HEK293T (cell line): ENCODE measurements at regions of chr1 and their contacts with region 1.

Region 1: DNA sequence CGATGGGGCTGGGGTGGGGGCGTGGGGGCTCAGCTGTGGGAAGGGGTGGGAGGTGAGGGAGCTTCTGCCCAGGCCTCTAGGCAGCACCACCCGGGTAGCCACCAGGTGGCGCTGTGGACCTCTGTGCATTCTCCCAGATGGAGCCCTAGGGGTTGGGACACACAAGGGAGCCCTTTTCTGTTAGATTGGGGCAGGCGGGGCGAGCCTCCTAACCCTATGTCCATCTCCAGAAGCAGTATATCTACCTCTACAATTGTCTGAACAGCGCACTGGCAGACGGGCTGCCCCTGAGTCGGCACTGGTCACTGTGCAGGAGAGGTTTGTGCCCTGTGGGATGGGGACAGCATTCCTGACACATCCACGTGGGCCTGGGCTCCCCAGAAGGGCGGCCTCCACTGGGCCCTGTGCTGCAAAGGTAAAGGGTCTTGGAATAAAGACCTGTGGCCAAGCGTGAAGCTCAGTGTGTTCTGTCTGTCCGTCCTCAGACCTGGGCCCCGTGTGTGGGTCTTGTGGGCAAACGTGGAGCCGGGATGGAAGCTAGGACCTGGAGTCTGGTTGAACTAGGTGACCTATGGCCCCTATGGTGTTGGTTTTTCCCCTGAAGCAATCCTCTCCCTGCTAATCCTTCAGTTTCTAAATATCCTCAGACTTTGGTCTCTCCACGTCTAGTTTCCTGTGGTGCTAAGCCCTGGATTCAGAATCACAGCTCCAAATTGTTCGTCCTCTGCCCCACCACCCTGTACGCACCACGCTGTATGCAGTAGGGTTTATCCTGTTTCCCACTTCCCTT is 4.4 kb upstream of the LGR6 start:
- DNase-seq: peak; percentile 68

Region 2: DNA sequence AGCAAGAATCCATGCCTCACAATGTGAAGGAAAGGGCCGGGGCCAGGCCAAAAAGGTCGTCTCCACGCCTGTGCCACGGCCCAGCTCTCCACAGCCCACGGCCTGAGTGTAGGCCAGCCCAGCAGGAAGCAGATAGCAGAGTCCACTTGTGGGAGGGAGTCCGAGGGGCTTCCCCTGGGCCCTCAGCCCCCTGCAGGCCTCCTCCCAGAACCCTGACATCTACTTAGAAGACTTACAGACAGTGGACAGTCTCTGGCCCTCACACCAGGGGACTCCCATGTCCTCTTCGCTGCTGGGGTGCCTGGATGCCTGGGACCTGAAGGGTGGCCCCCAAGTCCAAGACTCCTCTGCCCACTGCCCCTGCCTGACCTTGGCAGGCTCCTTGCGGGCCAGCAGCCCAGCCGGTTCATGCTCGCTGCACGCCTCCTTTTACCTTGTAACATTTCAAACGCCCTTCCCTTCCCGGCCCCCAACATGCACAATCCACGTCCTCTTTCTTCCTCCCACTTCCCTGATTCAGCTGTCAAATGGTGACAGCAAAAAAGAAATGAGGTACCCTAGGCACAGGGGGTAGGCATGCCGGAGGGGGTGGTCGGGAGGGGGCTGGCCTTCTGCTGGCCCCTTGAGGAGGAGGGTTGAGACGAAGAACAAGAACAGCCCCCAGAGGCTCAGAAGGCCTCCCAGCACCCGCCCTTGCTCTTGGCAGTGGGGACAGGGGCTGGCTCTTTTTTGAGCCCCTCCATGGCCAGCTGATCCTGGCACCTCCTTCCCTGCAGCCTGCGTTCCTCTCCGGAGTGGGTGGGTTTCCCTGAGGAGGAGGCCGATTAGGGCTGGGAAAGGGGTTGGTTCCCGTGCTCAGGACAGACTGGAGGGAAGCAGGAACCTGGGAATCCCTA is 27.8 kb before region 1 on chr1:
- CTCF ChIA-PET with region 1: no interaction called
- POLR2A ChIA-PET with region 1: no interaction called
- DNase-seq: no peak

Region 3: GRCh38 chr1:202315576-202316168 is 126.5 kb after region 1 on chr1:
- CTCF ChIA-PET with region 1: interaction called, 15 read pairs
- POLR2A ChIA-PET with region 1: no interaction called
- DNase-seq: peak; percentile 88

Region 4: GRCh38 chr1:202713110-202713509 is 523.9 kb after region 1 on chr1:
- CTCF ChIA-PET with region 1: interaction called, 12 read pairs
- POLR2A ChIA-PET with region 1: no interaction called
- DNase-seq: no peak